CD4-positive, alpha-beta T cell (primary cell): ENCODE measurements at regions of chr9 and their contacts with region 1.

Region 1: DNA sequence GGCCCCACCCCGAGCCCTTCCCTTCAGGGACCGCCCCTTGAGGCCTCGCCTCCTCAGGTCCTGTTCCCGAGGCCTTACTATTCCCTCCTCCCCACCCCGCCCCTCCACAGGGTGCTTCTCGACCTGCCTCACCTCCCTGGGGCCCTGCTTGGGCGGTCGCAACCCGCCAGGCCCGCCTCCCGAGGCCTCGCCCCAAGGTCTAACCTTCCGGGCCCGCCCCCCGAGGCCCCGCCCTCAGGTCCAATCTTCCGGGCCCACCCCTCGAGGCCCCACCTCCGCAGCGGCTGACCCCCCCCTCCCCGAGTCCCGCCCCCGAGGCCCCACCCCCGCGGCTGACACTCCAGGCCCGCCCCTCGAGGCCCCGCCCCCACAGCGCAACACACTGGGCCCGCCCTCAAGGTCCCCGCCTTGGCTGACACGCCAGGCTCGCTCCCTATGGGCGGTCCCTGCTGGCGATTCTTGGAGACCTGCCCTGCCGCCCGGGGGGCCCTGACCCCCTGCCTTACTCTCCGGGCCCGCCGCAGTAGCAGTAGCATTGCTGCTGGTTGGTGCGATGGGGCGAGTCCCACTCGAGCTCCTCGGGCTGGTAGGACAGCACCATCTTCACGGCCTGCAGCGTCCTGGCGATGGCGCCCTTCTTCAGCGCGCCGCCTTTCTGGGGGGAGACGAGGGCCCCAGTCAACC is 8.2 kb downstream of the PHF19 start:
- DNase-seq: peak; percentile 95 to 99 (median 97)
- ATAC-seq: peak; percentile 84
- H3K4me3 ChIP-seq: peak overlapping the region; percentile 73
- H3K4me3 Mint-ChIP-seq: peak overlapping the region; percentile 94
- H3K27ac ChIP-seq: peak overlapping the region; percentile 71 to 80
- H3K27ac Mint-ChIP-seq: peak overlapping the region; percentile 92
- H3K4me1 ChIP-seq: peaks cover 42% of the 10 kb centered on the region
- H3K4me1 Mint-ChIP-seq: peaks cover 29% of the 10 kb centered on the region
- H3K27me3 ChIP-seq: no peaks in the 10 kb centered on the region
- H3K27me3 Mint-ChIP-seq: no peaks in the 10 kb centered on the region
- CTCF ChIP-seq: peak; percentile 72

Region 2: DNA sequence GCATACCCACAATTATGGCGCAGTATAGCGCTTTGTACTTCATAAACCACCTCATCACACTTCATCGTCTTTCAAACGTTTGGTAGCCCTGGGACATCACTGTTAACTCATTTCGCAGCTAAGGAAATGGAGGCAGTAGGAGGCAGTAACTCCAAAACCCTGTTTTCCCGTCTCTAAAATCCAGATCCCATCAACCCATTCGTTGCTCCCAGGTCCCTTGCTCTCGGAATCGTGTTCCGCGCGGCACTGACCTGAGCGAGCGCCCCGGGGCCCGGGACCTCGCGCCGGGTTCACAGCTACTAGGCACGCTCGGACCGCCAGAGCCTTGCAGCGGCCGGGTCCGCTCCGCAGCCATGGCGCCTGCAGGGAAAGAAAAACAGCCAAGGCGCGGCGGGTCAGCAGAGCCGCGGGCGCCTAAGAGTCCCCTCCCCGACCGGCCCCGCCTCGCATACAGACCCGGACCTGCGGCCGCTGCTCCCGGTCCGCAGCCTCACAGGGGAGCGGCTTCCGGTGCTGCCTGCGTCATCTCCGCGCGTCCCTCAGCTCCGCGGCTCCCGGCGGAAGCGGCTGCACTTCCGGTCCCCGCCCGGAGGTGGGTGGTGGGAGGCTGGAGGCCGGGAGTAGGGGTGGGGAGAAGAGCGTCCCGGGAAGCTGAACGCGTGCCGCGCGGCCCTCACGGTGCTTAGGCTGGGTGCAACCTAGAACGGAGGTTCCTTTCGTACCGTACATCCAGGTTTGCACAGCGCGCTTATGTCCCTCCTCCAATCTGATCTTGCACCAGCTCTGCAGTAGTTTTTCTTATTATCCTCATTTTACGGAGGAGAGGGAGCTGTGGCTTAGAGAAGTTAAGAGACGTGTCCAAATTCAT is 75.7 kb before region 1 on chr9 and contains the start of gene FBXW2:
- CTCF ChIA-PET with region 1: interaction called, 5 read pairs
- POLR2A ChIA-PET with region 1: interaction called, 19 read pairs
- intact Hi-C with region 1: no loop called
- DNase-seq: peak; percentile 58 to 92 (median 78)
- ATAC-seq: peak; percentile 79
- H3K4me3 ChIP-seq: peak within 1 kb of the TSS; percentile 97
- H3K4me3 Mint-ChIP-seq: peak within 1 kb of the TSS; percentile 88
- H3K27ac ChIP-seq: peak within 1 kb of the TSS; percentile 81 to 82
- H3K27ac Mint-ChIP-seq: peak within 1 kb of the TSS; percentile 92
- H3K4me1 ChIP-seq: peaks cover 39% of the 10 kb centered on the region
- H3K4me1 Mint-ChIP-seq: peaks cover 63% of the 10 kb centered on the region
- H3K27me3 ChIP-seq: no peaks in the 10 kb centered on the region
- H3K27me3 Mint-ChIP-seq: no peaks in the 10 kb centered on the region
- CTCF ChIP-seq: no peak
- total RNA-seq, gene FBXW2: 58.7 to 64.7 TPM

Region 3: DNA sequence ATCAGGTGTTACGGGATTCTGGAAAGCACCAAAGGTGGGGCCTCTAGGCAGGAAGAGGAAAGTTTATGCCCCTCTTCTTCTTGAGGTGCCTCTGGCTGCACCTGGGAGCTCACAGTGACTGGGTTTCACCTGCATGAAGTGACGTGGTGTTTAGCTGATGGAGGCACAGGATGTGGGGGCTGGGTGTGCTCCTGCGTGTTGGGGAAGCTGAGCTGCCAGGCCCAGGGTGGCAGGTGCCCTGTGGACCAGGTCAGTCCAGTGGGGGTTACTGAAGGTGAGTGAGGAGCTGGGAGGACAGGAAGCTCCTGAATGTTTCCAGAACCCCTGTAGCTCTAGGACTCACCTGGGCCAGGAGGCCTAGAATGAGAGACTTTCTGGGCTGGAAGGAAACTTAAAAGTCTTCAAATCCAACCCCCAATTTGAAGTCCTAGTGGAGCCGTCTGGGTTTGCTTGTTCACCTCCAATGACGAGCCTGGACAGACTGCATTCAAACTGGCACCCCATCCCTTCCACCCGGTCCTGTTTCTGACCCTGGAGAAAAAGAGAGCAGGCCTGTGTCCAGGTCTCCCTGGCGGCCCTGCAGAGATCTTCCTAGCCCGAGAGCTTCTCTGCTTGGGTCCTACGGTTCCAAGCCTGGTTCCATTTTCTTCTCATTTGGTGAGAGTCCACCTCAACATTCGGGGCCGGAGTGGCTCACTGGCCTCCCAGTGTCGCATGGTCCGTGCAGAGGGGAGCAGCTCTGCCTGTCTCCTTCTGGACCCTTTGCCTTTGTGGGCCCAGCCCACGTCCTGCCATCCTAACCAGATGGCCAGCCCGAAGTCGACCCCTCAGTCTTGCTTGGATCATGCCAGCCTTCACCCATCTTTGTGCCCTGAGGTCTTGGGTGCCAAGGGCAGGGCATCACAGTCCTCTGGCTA is 35.5 kb after region 1 on chr9:
- CTCF ChIA-PET with region 1: interaction called, 6 read pairs
- POLR2A ChIA-PET with region 1: interaction called, 24 read pairs
- intact Hi-C with region 1: no loop called
- DNase-seq: peak; percentile 54 to 94 (median 70)
- ATAC-seq: peak; percentile 91
- H3K4me3 ChIP-seq: no peak overlapping the region
- H3K4me3 Mint-ChIP-seq: peak overlapping the region; percentile 35
- H3K27ac ChIP-seq: peak overlapping the region; percentile 92 to 93
- H3K27ac Mint-ChIP-seq: peak overlapping the region; percentile 99
- H3K4me1 ChIP-seq: peaks cover 80% of the 10 kb centered on the region
- H3K4me1 Mint-ChIP-seq: peaks cover 88% of the 10 kb centered on the region
- H3K27me3 ChIP-seq: no peaks in the 10 kb centered on the region
- H3K27me3 Mint-ChIP-seq: no peaks in the 10 kb centered on the region
- CTCF ChIP-seq: no peak

Region 4: GRCh38 chr9:120936011-120936763 is 67.4 kb after region 1 on chr9:
- CTCF ChIA-PET with region 1: interaction called, 35 read pairs
- POLR2A ChIA-PET with region 1: interaction called, 284 read pairs
- intact Hi-C with region 1: loop called (anchors 1 kb)
- DNase-seq: peak; percentile 79 to 95 (median 88)
- ATAC-seq: peak; percentile 64
- H3K4me3 ChIP-seq: no peak overlapping the region
- H3K4me3 Mint-ChIP-seq: peak overlapping the region; percentile 46
- H3K27ac ChIP-seq: peak overlapping the region; percentile 45 to 100
- H3K27ac Mint-ChIP-seq: peak overlapping the region; percentile 100
- H3K4me1 ChIP-seq: peaks cover 56% of the 10 kb centered on the region
- H3K4me1 Mint-ChIP-seq: peaks cover 57% of the 10 kb centered on the region
- H3K27me3 ChIP-seq: no peaks in the 10 kb centered on the region
- H3K27me3 Mint-ChIP-seq: no peaks in the 10 kb centered on the region
- CTCF ChIP-seq: peak; percentile 94

Region 5: DNA sequence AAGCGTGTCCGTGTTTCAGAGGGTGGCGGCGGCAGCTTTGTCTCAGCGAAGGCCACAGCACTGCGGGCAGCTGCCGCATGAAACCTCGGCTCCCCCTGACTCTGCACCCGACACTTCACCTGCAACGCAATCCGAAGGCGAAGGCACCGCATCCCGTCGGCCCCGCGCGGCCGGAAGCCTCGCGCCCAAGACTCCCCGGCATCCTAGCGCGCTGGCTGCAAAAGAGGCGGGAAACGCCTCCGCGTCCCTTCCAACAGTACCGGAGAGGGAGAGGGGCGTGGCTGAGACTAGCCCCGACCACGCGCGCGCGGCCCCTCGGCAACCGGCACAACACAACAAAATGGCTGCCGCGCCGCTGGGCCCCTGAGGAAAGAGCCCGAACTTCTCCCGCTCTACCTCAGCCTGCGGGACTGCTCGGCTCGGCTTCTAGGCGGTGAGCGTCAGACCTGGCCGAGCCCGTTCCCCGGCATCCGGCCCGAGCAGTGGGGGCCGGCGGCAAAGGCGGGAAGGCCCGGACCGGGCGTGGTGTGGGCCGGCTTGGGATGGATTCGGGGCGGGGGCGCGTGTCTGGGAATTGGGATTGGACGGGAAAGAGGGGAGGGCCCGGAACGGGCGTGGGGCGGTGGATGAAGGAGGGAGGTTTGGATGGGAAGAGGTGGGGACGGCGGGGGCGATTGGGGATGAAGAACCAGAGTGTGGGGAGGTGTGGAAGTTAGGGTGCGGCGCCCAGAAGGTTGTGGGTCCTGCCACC is 206.0 kb after region 1 on chr9 and contains the start of gene CNTRL:
- CTCF ChIA-PET with region 1: no interaction called
- POLR2A ChIA-PET with region 1: interaction called, 3 read pairs
- intact Hi-C with region 1: loop called in 1 of 2 experiments (anchors 5 kb)
- DNase-seq: peak; percentile 54 to 93 (median 78)
- ATAC-seq: peak; percentile 81
- H3K4me3 ChIP-seq: peak within 1 kb of the TSS; percentile 92
- H3K4me3 Mint-ChIP-seq: peak within 1 kb of the TSS; percentile 89
- H3K27ac ChIP-seq: peak within 1 kb of the TSS; percentile 75 to 81
- H3K27ac Mint-ChIP-seq: peak within 1 kb of the TSS; percentile 98
- H3K4me1 ChIP-seq: peaks cover 30% of the 10 kb centered on the region
- H3K4me1 Mint-ChIP-seq: peaks cover 54% of the 10 kb centered on the region
- H3K27me3 ChIP-seq: no peaks in the 10 kb centered on the region
- H3K27me3 Mint-ChIP-seq: no peaks in the 10 kb centered on the region
- CTCF ChIP-seq: no peak
- total RNA-seq, gene CNTRL: 35.1 to 38.1 TPM